Activated CD4-positive, alpha-beta T cell treated with anti-CD3 and anti-CD28 coated beads for 36 hours (primary cell): ENCODE measurements at regions of chr1 and their contacts with region 1.

Region 1: DNA sequence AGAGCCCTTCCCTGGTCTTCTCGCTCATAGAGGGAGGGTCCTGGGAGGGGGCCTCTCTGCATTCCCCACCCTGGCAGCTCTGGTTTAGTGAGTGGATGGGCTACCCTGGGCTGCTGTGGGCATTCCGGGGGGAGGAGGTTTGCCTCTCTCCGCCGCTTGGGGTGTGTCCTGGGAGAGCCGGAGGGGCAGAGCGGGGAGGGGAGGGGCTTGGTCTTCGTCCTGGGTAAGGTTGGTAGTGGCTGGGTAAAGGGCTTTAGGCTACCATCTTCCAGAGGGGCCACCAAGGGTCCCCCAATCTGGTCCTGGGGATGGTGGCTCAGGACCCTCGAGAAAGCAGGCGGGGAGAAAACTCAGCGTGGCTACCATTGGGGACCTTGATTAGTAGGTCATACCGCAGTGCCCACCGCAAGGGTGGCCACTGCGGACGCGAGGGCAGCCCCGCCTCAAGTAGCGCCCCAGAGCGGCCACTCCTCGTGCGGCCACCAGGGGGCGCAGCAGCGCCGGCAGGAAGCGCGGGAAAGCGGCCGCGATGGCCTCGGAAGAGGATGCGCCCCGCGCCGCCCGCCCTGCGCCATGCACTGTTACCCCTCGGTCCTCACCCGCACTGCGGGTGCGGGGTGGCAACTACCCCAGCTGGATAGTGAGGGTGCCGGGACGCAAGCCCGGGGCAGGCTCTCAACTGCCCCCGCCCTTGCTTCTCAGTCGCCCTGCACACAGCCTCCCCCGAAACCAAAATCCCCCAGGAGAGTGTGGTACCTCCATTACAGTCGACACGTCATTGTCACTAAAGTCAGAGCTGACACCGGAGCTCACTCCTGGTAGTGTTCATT is 44.1 kb upstream of the SLC25A33 start:
- DNase-seq: peak; percentile 84
- ATAC-seq: peak; percentile 90
- H3K4me3 Mint-ChIP-seq: peak overlapping the region; percentile 57
- H3K27ac Mint-ChIP-seq: no peak overlapping the region
- H3K4me1 Mint-ChIP-seq: peaks cover 7% of the 10 kb centered on the region
- H3K27me3 Mint-ChIP-seq: peaks cover 7% of the 10 kb centered on the region

Region 2: DNA sequence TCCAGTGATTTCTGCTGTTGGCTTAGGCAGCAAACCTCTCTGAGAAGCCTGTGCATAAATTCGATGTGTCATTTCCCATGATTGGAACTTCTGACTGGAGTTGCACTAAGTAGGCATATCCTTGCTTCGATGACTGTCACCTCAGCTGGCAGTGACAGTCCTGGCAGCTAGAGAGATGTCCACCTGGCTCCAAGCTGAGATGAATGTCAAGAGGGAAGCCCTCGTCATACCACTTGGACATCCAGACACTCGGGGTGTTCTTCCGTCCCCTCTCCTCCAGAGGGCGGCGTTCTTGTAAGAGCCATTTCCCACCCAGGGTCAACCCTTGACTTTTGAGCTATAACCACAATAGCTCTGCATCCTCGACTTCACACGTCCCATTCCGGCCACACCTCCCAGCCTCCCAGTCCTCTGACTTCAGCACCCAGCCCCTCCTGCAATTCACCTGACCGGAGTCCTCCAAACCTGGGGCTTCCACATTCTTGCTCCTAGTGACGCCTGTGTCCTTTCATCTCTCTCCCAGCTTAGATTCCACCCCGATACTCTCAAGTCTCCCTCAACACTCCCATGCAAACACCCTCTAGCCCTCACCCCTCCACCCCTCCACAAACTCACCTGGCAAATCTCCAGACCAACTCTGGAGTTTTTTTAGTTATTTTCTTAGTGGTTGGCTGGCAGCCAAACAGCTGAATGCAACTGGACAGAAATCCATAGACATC is 532.2 kb before region 1 on chr1:
- CTCF ChIA-PET with region 1: no interaction called
- POLR2A ChIA-PET with region 1: no interaction called
- intact Hi-C with region 1: no loop called
- DNase-seq: peak; percentile 67
- ATAC-seq: peak; percentile 57
- H3K4me3 Mint-ChIP-seq: no peak overlapping the region
- H3K27ac Mint-ChIP-seq: peak overlapping the region; percentile 27
- H3K4me1 Mint-ChIP-seq: peaks cover 47% of the 10 kb centered on the region
- H3K27me3 Mint-ChIP-seq: no peaks in the 10 kb centered on the region

Region 3: DNA sequence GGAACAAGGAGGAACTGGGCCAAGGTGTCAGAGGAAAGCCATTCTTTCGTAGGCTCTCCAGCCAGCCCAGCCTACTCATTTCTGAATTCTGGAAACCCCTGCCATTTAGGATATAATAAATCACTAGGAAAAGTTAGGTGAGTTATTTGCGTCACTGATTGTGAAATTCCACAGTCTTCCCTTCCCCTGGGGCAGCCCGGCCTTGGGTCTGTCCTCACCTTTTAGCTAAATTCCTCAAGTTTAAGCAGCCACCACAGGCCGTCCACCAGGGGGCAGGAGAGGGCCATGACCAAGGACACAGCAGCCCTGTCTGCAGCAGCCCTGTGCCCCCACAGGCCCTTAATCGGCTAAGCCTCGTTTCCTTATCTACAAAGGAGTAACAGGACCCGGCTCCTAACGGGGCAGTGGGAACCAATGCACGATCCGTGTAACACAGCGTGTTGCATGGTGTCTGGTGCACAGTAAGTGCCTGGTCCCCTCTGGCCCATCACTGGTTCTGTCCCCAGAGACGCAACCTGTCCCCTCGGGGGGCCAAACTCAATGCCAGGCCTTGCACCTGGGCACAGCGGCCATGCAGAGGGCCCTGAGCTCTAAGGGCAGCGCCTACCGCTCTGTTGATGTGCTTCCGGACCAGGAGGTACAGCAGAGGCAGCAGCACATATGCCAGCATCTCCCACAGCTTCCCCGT is 384.3 kb before region 1 on chr1:
- CTCF ChIA-PET with region 1: no interaction called
- POLR2A ChIA-PET with region 1: no interaction called
- intact Hi-C with region 1: loop called in 1 of 2 experiments (anchors 1 kb)
- DNase-seq: peak; percentile 93
- ATAC-seq: peak; percentile 75
- H3K4me3 Mint-ChIP-seq: no peak overlapping the region
- H3K27ac Mint-ChIP-seq: no peak overlapping the region
- H3K4me1 Mint-ChIP-seq: peaks cover 5% of the 10 kb centered on the region
- H3K27me3 Mint-ChIP-seq: no peaks in the 10 kb centered on the region

Region 4: GRCh38 chr1:9181176-9181906 is 313.8 kb before region 1 on chr1:
- CTCF ChIA-PET with region 1: no interaction called
- POLR2A ChIA-PET with region 1: no interaction called
- intact Hi-C with region 1: loop called in 1 of 2 experiments (anchors 5 kb)
- DNase-seq: peak; percentile 84
- ATAC-seq: peak; percentile 65
- H3K4me3 Mint-ChIP-seq: peak overlapping the region; percentile 74
- H3K27ac Mint-ChIP-seq: peak overlapping the region; percentile 72
- H3K4me1 Mint-ChIP-seq: peaks cover 7% of the 10 kb centered on the region
- H3K27me3 Mint-ChIP-seq: peaks cover 32% of the 10 kb centered on the region

Region 5: GRCh38 chr1:9275567-9276034 is 219.5 kb before region 1 on chr1:
- CTCF ChIA-PET with region 1: interaction called, 11 read pairs
- POLR2A ChIA-PET with region 1: no interaction called
- intact Hi-C with region 1: no loop called
- DNase-seq: peak; percentile 93
- ATAC-seq: peak; percentile 89
- H3K4me3 Mint-ChIP-seq: peak overlapping the region; percentile 2
- H3K27ac Mint-ChIP-seq: peak overlapping the region; percentile 47
- H3K4me1 Mint-ChIP-seq: peaks cover 33% of the 10 kb centered on the region
- H3K27me3 Mint-ChIP-seq: no peaks in the 10 kb centered on the region

Region 6: GRCh38 chr1:9476790-9477463 is 18.2 kb before region 1 on chr1:
- CTCF ChIA-PET with region 1: interaction called, 12 read pairs
- POLR2A ChIA-PET with region 1: no interaction called
- intact Hi-C with region 1: no loop called
- DNase-seq: peak; percentile 20
- ATAC-seq: peak; percentile 74
- H3K4me3 Mint-ChIP-seq: no peak overlapping the region
- H3K27ac Mint-ChIP-seq: no peak overlapping the region
- H3K4me1 Mint-ChIP-seq: no peaks in the 10 kb centered on the region
- H3K27me3 Mint-ChIP-seq: peaks cover 2% of the 10 kb centered on the region

Region 7: DNA sequence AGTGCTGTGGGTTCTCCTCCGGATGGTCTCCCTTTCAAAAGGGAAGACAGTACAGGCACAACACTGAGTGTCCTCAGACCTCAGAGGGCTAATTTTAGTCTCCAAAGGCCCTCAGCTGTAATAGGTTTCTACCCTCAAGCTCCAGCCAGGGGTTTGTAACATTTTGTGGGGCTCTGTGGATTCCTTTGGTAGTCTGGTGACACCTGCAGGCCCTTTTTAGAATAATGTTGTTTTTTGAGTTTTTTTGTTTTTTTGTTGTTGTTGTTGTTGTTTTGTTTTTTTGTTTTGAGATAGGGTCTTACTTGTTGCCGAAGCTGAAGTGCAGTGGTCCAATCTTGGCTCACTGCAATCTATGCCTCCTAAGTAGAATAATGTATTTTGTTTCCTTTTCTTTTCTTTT is 78.6 kb after region 1 on chr1:
- CTCF ChIA-PET with region 1: interaction called, 9 read pairs
- POLR2A ChIA-PET with region 1: no interaction called
- intact Hi-C with region 1: loop called (anchors 1 to 2 kb)
- DNase-seq: no peak
- ATAC-seq: no peak
- H3K4me3 Mint-ChIP-seq: no peak overlapping the region
- H3K27ac Mint-ChIP-seq: no peak overlapping the region
- H3K4me1 Mint-ChIP-seq: no peaks in the 10 kb centered on the region
- H3K27me3 Mint-ChIP-seq: no peaks in the 10 kb centered on the region